Adrenal gland (tissue), 19 donors: ENCODE measurements at regions of chr14 and their contacts with region 1.

Region 1: DNA sequence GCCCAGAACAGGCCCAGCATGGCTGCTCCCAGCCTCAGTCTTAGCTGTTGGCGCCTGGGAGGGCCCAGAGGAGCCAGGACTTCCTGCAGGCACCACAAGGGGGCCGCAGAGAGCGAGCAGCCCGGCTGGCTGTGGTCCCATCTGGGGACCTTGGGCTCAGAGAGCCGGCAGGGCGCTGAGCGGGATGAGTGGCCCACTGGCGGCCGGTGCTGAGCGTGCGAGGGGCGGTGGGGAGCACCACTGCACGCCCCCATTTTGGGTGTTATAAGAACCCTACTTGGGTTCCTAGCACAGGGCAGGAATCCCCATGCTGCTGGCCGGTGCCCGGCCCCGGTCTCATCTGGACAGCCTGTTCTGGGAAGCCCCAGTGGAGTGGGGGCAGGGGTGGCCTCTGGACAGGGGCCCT is 25.9 kb upstream of the CRIP2 start:
- DNase-seq: peak; percentile 64 to 89 (median 78)
- H3K4me3 ChIP-seq: no peak overlapping the region
- H3K27ac ChIP-seq: no peak overlapping the region
- H3K4me1 ChIP-seq: peaks cover 0 to 7% of the 10 kb centered on the region in 2 donors
- H3K27me3 ChIP-seq: no peaks in the 10 kb centered on the region
- CTCF ChIP-seq: peak; percentile 79 to 94 (median 93)
- POLR2A ChIP-seq: no peak

Region 2: DNA sequence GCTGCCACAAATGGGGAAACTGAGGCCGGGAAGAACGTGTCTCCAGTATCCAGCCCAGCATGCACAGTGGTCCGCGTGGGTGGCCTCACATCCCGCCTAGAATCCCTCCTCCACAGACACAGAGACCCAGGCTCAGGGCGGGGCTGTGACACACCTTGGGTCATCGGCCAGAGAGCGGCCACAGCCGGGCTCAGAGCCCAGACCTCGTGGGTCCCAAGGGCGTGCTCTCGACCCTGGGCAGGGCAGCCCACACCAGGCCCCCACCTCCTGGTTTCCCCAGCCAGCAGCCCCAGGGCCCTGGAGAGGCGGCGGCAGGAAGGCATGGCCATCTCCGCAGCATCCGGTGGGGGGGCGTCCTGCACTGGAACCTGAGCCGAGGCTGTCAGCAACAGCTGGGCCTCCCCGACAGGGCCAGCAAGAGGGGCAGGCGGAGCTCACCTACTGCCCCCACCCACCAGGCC is 295.4 kb before region 1 on chr14:
- intact Hi-C with region 1: no loop called
- DNase-seq: peak in 2 of 7 donors; percentile 19 to 37
- H3K4me3 ChIP-seq: no peak overlapping the region
- H3K27ac ChIP-seq: peak overlapping the region in 1 of 5 donors; percentile 58
- H3K4me1 ChIP-seq: no peaks in the 10 kb centered on the region
- H3K27me3 ChIP-seq: peaks cover 2% of the 10 kb centered on the region
- CTCF ChIP-seq: no peak
- POLR2A ChIP-seq: no peak

Region 3: DNA sequence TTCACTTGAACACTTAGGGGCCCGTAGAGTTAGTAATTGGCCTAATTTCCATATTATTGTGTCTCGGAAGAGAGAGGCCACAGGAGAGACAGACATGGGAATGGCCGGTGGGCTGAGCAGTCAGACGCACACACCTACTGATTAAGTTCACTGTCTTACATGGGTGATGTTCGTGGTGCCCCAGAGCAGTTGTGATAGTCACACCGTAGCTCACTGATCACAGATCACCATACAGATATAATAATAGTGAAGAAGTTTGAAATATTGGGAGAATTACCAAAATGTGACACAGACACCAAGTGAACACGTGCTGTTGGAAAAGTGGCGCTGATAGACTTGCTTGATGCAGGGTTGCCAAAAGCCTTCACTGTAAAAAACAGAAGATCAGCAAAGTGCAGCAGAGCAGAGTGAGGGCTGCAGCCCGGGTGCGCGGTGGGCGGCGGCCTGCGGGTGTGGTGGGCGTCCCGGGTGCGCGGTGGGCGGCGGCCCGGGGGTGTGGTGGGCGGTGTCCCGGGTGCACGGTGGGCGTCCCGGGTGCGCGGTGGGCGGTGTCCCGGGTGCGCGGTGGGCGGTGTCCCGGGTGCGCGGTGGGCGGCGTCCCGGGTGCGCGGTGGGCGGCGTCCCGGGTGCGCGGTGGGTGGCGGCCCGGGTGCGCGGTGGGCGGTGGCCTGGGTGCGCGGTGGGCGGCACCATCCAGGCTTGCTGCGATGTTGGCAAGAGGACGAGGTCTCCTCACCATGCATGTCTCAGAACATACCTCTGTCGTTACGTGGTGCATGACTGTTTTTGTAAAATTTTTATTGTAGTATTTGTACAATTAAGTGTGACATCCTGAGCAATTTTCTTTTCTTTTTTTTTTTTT is 84.6 kb before region 1 on chr14:
- intact Hi-C with region 1: no loop called
- DNase-seq: peak in 1 of 7 donors; percentile 16
- H3K4me3 ChIP-seq: no peak overlapping the region
- H3K27ac ChIP-seq: no peak overlapping the region
- H3K4me1 ChIP-seq: no peaks in the 10 kb centered on the region
- H3K27me3 ChIP-seq: no peaks in the 10 kb centered on the region
- CTCF ChIP-seq: no peak
- POLR2A ChIP-seq: no peak

Region 4: GRCh38 chr14:105489542-105490266 is 41.0 kb after region 1 on chr14:
- intact Hi-C with region 1: loop called in 1 of 2 experiments (anchors 5 kb)
- DNase-seq: peak; percentile 83 to 95 (median 86)
- H3K4me3 ChIP-seq: peak overlapping the region in 2 of 4 donors; percentile 17 to 77
- H3K27ac ChIP-seq: peak overlapping the region in 4 of 5 donors; percentile 82 to 91 (median 86)
- H3K4me1 ChIP-seq: peaks cover 7 to 35% of the 10 kb centered on the region in 2 donors
- H3K27me3 ChIP-seq: peaks cover 11% of the 10 kb centered on the region
- CTCF ChIP-seq: peak; percentile 38 to 66 (median 63)
- POLR2A ChIP-seq: peak in 1 of 2 donors; percentile 31